Sciatic nerve (tissue), 2 donors: ENCODE measurements at regions of chr1 and their contacts with region 1.

Region 1: GRCh38 chr1:211133836-211134669 is at the start of gene KCNH1:
- DNase-seq: peak; percentile 89
- ATAC-seq: peak; percentile 93
- total RNA-seq, gene KCNH1: 3.2 TPM

Region 2: DNA sequence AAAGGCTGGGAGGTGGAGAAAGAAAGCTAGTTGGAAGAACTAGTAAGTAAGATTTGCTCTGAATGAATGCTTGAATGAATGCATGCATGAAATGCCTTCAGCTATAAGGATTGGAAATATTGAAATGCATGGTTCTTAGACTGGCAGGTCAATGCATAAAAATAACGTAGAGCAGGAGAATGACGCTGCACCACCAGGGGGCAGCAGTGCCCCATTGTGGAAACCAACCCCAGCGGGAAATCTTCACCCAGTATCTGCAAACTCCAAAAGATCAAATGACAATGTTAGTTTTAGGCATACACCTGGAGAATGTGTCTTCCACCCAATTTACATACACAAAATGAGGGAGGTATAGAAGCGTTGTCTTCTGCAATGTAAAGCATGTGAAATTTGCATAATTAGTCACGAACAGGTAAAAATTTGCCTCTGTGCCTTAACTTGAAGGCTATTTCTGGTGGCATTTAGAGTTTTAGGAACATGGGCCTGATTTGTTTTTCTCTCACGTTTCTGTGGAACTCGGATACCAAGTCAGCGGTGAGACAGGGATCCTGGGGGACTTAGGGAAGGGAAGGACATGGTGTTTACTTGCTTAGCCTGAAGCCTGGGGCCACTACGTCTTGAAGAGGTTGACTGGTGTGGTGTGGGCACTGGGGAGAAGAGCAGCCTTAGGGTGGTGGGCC is 726.7 kb before region 1 on chr1:
- intact Hi-C with region 1: loop called (anchors 5 kb)
- DNase-seq: peak; percentile 85
- ATAC-seq: peak; percentile 75

Region 3: DNA sequence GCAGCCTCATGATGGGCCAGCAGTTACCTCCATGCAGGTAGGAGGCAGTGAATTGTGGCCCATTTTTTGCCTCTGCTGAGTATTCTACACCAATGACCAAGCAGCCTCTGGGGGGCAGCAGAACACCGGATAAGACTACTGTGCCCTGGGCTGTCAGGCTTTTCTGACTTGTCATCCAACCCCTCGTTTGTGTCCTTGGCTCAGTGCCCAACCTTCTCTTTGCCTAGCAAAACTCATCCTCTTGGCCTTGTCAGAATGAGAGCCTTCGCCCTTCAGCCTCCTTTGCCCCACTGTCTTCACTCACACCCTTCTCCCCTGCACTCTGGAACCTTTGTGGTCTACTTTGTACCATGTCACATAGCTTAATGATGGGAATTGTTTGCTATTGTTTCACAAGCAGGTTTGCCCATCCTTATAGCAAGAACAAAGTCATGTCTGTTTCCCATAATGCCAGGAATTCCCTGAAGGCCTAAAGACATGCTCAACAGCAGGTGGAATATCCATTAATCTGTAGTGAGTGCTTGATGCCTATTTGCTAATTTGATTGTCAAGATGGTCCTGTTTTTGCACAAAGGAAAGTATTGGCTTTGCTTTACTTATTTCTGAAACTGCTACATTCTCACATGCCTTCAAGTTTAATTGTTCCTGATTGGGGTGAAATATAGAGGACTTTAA is 549.5 kb before region 1 on chr1:
- intact Hi-C with region 1: loop called (anchors 10 kb)
- DNase-seq: peak; percentile 87
- ATAC-seq: peak; percentile 88